ENCODE measurements at regions of chr5 and their contacts with region 1.

Region 1: GRCh38 chr5:160199410-160199911 is 29.8 kb upstream of the FABP6 start:
- DNase-seq: peak; percentile 32 to 77
- ATAC-seq: peak; percentile 98

Region 2: DNA sequence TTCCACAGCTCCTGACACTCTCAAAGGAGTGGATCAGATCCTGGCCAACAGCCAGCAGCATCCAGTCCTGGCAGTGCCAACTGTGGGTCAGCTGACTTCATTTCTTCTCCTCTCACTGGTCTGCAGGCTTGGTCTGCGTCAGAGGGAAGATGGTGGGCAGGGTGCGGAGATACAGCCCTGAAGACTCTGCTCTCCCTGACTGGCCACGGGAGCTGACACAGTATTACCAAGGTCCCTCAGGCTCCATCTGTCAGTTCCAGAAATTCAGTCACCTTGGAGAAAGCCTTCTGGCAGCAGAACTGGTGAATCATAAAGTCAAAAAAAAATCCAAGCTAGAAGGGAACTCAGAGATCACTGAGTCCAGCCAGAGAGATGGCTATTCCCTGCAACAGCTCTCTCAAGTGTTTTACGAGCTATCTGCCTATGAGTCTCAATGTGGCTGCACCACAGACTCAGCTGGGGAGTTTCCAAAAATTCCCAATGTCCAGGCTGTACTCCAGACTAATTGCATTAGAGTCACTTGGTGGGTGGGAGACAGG is 143.0 kb after region 1 on chr5:
- intact Hi-C with region 1: loop called in 1 of 2 experiments (anchors 2 kb)
- DNase-seq: peak in 1 of 2 donors; percentile 30
- ATAC-seq: peak; percentile 19

Region 3: DNA sequence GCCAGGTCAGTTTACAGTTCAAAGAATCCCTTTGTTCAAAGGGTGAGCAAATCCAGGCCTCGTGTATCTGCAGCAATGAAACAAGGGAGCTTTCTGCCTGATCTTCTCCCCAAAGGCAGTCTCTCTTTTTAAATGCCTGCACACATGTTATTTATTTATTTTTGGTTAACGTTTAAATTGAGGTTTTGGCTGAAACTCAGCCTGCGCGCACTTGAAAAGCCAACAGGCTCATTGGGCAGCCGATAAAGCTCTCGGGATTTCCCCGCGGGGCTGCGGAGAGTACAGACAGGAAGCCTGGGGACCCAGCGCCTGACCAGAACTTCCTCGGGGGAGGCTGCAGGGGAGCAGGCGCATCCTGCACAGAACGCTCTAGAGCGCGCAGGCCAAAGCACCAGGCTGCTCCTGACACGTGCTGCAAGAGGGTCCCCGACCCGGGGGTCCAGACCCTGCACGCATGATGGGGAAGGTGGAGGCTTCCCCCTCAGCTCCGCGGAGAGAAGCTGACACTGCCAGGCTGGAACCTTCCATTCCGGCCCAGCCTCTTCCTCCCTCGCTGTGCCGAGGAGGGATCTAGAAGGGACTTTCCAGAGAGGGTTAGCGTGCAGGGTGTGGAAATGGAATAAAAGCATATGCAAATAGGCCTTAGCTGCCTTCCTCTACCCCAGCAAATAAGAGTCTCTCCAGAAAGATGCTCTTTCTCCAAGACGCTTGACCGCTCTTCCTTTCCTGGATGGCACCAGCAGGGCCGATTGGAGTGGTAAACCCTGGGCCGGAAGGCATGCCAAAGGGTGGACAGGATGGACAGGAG is 268.3 kb after region 1 on chr5:
- intact Hi-C with region 1: no loop called
- DNase-seq: peak; percentile 82 to 86
- ATAC-seq: peak; percentile 79

Measured in left colon (tissue), 2 donors.